Activated B cell treated with CpG ODN at 0.5 μM for 24 hours (primary cell): ENCODE measurements at regions of chr5 and their contacts with region 1.

Region 1: GRCh38 chr5:127030259-127031146 is at the start of gene MARCHF3:
- DNase-seq: peak; percentile 98
- ATAC-seq: peak; percentile 93
- H3K4me3 Mint-ChIP-seq: peak within 1 kb of the TSS; percentile 94
- H3K27ac Mint-ChIP-seq: peak within 1 kb of the TSS; percentile 90
- H3K4me1 Mint-ChIP-seq: peaks cover 45% of the 10 kb centered on the region
- H3K27me3 Mint-ChIP-seq: no peaks in the 10 kb centered on the region
- CTCF ChIP-seq: no peak
- total RNA-seq, gene MARCHF3: 21.9 and 22.8 TPM in 2 replicates

Region 2: DNA sequence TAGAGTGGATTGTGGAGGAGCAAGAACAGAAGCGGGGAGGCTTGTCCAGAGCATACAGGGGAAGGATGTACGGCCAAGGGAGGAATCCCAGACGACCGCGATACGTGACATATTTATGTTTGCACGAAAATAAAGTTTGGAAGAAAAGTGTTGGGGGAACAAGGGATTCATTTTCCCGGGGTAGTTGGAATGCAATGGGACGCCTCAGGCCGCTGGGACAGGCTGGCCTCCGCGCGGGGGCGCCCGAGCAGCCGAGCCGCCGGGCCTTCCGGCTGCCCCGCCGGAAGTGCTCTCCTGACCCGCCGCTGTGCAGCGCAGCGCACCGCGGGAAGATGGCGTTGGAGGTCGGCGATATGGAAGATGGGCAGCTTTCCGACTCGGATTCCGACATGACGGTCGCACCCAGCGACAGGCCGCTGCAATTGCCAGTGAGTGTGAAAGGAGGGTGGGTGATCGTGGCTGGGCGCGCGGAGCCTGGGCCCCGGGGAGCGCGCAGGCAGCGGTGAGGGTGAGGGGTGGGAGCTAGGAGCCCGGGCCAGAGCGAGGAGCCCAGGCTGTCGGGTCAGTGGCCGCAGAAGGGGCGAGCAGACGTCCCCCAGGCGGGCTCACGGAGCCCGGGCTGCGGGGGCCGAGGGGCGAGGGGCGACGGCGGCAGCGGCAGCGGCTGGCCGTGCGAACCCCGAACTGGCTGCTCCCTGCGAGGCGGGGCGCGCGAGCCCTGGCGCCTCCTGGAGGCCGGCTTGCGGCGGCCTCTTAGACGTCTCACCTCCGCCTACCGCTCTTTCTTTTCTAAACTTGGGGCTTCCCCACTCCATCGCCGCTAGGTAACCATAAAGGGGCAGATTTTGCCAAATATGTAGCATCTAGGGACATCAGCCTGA is 429.6 kb before region 1 on chr5 and contains the start of gene PHAX:
- CTCF ChIA-PET with region 1: no interaction called
- POLR2A ChIA-PET with region 1: no interaction called
- intact Hi-C with region 1: loop called (anchors 2 kb)
- DNase-seq: peak; percentile 76
- ATAC-seq: peak; percentile 94
- H3K4me3 Mint-ChIP-seq: peak within 1 kb of the TSS; percentile 99
- H3K27ac Mint-ChIP-seq: peak within 1 kb of the TSS; percentile 95
- H3K4me1 Mint-ChIP-seq: peaks cover 36% of the 10 kb centered on the region
- H3K27me3 Mint-ChIP-seq: no peaks in the 10 kb centered on the region
- CTCF ChIP-seq: no peak
- total RNA-seq, gene PHAX: 31.0 and 33.3 TPM in 2 replicates

Region 3: DNA sequence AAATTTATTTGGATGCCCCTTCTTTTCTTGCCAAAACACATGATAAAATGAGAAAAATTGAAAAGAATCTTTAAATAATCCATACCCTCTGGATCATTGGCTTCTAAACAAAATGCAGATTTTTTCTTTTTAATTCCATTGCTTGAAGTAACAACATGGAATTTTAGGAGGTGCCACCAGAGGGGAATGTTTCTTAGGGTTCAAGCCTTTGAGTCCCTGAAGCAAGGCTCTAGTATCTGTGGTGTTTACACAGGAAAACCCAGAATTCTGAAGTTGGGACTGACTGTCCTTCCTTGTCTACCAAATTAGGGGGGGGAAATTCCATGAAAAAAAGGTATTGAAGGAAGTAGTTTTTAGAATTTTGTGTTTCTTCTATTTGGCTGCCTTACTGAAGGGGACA is 184.2 kb before region 1 on chr5:
- CTCF ChIA-PET with region 1: no interaction called
- POLR2A ChIA-PET with region 1: interaction called, 15 read pairs
- intact Hi-C with region 1: loop called (anchors 1 kb)
- DNase-seq: no peak
- ATAC-seq: no peak
- H3K4me3 Mint-ChIP-seq: no peak overlapping the region
- H3K27ac Mint-ChIP-seq: peak overlapping the region; percentile 95
- H3K4me1 Mint-ChIP-seq: peaks cover 41% of the 10 kb centered on the region
- H3K27me3 Mint-ChIP-seq: no peaks in the 10 kb centered on the region
- CTCF ChIP-seq: no peak

Region 4: GRCh38 chr5:126972062-126972895 is 58.2 kb before region 1 on chr5:
- CTCF ChIA-PET with region 1: interaction called, 3 read pairs
- POLR2A ChIA-PET with region 1: interaction called, 14 read pairs
- intact Hi-C with region 1: loop called (anchors 1 kb)
- DNase-seq: peak; percentile 29
- ATAC-seq: peak; percentile 77
- H3K4me3 Mint-ChIP-seq: peak overlapping the region; percentile 84
- H3K27ac Mint-ChIP-seq: peak overlapping the region; percentile 100
- H3K4me1 Mint-ChIP-seq: peaks cover 77% of the 10 kb centered on the region
- H3K27me3 Mint-ChIP-seq: no peaks in the 10 kb centered on the region
- CTCF ChIP-seq: no peak

Region 5: DNA sequence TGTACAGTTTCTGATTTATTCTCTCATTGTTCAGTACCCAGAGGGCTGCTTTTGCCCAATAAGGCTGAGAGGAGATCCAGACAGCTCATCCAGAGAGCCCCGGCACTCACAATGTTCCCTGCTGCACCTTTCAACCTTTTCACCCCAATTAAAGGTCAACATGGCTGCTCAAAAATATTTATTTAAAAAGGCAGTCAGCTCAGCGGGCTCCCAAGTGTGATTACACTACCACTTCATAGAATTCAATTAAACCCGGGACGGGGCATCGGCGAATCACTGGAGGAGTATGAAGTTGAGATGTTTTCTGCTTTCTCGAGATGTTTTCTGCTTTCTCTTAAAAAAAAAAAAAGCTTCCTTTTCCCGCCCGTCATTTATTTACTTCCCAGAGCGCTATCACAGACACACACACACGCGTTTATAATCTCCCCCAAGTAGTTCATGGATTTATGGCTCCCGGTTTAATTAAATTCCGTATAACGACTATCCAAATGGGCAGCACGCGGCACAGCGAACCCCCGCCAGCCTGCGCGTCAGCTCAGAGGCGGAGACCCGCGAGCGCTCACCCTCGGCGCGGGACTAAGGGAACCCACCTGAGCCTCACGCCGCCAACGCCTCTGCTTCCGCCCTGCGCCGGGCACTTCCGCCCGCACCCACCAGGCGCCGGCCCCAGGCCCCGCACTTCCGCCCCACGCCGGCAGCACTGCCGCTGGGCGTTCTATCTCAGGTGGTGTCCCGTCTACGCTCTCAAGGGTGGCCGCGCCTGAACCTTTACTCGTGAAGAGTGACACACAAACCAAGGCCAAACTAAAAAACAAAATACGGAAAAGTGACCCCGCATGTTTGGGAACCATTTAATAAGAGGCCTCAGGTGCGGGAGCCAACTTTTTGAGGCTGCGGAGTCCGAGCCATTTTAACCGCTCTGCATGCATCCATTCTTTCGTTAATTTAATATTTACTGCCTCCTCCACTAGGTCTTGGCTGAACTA is 42.7 kb after region 1 on chr5 and contains the start of gene C5orf63:
- CTCF ChIA-PET with region 1: interaction called, 4 read pairs
- POLR2A ChIA-PET with region 1: interaction called, 47 read pairs
- intact Hi-C with region 1: loop called (anchors 1 kb)
- DNase-seq: peak; percentile 77
- ATAC-seq: peak; percentile 99
- H3K4me3 Mint-ChIP-seq: peak within 1 kb of the TSS; percentile 87
- H3K27ac Mint-ChIP-seq: peak within 1 kb of the TSS; percentile 87
- H3K4me1 Mint-ChIP-seq: peaks cover 9% of the 10 kb centered on the region
- H3K27me3 Mint-ChIP-seq: no peaks in the 10 kb centered on the region
- CTCF ChIP-seq: no peak
- total RNA-seq, gene C5orf63: 20.4 and 22.5 TPM in 2 replicates

Region 6: DNA sequence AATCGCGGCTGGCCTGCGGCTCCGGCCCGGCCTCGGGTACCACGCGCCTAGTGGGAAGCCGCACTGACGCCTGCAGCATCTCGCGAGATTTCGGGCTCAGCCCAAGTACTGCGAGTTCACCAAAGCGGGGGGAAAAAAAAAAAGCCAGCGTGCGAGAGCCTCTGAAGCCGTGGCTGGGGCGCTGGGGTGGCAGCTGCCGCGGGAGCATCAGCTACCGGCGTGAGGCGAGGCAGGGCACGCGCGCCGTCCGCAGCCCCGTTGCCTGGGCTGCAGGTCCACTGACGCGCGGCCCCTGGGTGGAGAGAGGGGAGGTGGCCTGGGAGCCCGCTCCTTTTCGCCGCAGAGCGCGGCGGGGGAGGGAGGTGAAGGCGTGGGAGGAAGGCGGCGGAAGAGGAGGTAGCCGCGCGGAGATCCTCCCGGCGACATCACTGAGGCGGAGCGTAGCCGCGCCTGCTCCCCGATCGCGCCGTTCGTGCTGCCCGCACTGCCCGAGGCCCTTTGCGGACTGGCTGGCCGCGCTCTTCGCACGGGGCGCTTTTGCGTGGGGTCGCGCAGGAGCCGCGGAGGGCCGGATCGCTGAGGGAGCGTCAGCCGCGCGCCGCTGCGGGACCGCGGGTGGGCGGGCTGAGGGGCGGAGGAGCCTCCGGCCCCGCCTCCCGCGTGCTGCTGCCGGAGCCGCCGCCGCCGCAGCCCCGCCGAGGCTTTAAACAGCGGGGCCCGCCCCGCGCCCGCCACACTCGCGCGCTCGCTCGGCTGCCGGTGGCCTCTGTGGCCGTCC is 1052.7 kb after region 1 on chr5 and contains the start of gene SLC12A2:
- CTCF ChIA-PET with region 1: no interaction called
- POLR2A ChIA-PET with region 1: no interaction called
- intact Hi-C with region 1: loop called (anchors 1 kb)
- DNase-seq: peak; percentile 92
- ATAC-seq: peak; percentile 75
- H3K4me3 Mint-ChIP-seq: peak within 1 kb of the TSS; percentile 95
- H3K27ac Mint-ChIP-seq: peak within 1 kb of the TSS; percentile 97
- H3K4me1 Mint-ChIP-seq: peaks cover 72% of the 10 kb centered on the region
- H3K27me3 Mint-ChIP-seq: no peaks in the 10 kb centered on the region
- CTCF ChIP-seq: no peak
- total RNA-seq, gene SLC12A2: 19.9 and 20.6 TPM in 2 replicates